ENCODE measurements at regions of chr7 and their contacts with region 1.

Region 1: DNA sequence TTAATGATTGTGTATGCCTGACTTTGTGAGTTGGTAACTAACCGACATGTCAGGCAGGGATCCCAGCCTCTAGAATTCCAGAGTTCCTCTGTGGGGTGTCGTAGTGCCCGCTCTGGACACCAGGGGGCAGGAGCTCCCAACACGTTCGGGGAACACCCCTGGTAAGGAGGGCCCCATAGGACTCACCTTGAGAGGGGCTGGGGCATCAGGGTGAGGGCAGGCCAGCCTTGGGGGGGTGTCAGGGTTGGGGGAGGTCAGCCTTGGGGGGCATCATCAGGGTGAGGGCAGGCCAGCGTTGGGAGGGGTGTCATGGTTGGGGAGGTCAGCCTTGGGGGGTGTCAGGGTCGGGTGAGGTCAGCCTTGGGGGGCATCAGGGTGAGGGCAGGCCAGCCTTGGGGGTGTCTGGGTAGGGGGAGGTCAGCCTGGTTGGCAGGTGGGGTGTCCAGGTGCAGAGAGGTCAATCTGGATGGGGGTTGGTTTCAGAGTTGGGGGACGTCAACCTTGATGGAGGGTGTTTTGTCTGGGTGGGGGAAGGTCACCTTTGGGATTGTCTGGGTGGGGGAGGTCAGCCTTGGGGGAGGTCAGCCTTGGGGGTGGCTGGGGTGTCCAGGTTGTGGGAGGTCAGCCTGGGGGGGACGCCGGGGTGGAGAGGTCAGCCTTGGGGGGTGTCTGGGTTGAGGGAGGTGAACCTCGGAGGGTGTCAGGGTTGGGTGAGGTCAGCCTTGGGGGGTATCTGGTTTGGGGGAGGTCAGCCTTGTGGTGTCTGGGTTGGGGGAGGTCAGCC is 45.6 kb upstream of the SUN1 start:
- DNase-seq: peak; percentile 88
- CTCF ChIP-seq: peak; percentile 92

Region 2: DNA sequence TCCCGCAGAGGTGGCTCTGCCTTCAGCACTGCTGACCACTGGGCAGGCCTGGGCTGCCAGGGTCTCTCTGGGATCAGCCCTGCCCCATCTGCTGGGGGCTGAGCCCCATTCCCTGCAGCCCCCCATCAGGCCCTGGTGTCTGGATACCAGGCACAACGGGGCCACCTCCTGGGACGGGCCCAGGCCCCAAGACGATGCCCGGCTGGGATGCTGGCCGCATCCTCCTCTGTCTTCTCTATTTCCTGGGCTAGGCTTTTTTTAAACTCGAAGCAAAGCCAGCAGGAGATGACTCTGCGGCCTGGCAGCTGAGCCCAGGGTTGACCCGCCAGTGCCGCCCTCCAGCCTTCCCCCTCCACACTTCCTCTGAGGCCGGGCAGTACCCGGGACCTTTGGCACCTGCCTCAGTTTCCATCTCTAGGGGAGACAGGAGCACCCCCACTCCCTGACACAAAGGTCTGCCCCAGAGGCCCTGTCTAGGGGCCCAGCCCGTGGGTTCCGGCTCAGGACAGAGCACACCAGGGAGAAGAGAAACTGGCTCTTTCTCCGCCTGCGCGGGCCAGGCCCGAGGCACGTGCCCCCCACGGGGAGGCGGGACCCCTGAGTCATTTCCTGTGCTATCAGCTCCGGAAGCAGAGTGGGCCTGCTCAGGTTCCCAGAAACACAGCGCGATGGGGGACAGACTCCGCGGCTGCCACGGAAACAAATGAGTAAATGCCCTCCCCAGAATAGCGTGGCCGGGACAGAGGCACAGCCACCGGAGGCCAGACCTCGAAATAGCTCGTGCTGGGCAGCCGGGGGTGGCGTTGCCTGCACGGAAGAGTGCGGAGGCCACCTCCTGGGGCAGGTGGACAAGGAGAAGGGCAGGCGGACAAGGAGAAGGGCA is 182.4 kb before region 1 on chr7:
- in situ Hi-C with region 1: no loop called
- DNase-seq: peak; percentile 91
- CTCF ChIP-seq: peak; percentile 6

Region 3: DNA sequence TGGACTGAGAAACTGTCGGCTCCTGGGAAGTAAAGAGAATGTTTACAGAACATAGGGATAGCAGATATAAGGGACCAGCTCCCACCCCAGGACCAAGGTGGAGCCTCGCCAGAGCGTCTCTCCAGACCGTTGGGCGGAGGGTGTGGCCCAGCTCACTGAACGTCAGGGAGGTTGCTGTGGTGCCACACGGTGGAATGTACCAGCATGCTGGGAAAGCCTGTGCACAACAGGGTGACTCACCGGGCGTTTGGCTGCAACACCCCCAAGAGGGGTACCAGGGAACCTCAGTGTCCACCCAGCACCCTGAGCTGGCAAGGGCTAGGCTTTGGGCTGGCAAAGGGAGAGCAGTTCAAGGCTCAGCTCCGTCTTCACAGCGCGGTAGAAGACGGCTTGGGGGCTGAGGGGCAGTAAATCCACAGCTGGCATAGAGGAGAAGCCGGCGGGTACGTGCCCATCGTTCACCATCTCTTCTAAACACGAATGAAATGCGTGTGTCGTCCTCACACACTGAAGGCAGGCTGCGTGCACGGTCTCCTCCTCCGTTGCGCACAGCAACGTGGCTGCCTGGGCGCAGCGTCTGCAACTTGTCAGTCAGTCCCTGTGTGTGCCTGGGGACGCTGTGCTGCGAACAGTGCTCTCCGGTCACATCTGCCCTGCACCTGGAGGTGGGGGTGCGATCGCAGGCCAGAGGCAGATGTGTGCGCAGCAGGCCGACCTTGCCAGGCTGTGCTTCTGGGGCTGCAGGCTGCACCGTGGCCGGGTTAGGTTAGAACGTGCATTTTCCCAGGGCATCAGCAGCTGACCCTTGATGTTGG is 81.2 kb after region 1 on chr7:
- in situ Hi-C with region 1: loop called (anchors 10 kb)
- DNase-seq: no peak
- CTCF ChIP-seq: no peak